Heart left ventricle (tissue), 16 donors: ENCODE measurements at regions of chr15 and their contacts with region 1.

Region 1: GRCh38 chr15:101501703-101502373 is 12.3 kb upstream of the PCSK6 start:
- DNase-seq: peak in 2 of 5 donors; percentile 56 to 61
- ATAC-seq: peak; percentile 32 to 58 (median 52)
- H3K4me3 ChIP-seq: peak overlapping the region in 3 of 12 donors; percentile 2 to 13 (median 4)
- H3K27ac ChIP-seq: peak overlapping the region in 4 of 12 donors; percentile 71 to 84 (median 77)
- H3K4me1 ChIP-seq: peaks cover 0 to 38% (median 10%) of the 10 kb centered on the region in 12 donors
- H3K27me3 ChIP-seq: peaks cover 0 to 15% (median 0%) of the 10 kb centered on the region in 9 donors
- CTCF ChIP-seq: peak; percentile 28 to 66 (median 52)
- POLR2A ChIP-seq: no peak

Region 2: DNA sequence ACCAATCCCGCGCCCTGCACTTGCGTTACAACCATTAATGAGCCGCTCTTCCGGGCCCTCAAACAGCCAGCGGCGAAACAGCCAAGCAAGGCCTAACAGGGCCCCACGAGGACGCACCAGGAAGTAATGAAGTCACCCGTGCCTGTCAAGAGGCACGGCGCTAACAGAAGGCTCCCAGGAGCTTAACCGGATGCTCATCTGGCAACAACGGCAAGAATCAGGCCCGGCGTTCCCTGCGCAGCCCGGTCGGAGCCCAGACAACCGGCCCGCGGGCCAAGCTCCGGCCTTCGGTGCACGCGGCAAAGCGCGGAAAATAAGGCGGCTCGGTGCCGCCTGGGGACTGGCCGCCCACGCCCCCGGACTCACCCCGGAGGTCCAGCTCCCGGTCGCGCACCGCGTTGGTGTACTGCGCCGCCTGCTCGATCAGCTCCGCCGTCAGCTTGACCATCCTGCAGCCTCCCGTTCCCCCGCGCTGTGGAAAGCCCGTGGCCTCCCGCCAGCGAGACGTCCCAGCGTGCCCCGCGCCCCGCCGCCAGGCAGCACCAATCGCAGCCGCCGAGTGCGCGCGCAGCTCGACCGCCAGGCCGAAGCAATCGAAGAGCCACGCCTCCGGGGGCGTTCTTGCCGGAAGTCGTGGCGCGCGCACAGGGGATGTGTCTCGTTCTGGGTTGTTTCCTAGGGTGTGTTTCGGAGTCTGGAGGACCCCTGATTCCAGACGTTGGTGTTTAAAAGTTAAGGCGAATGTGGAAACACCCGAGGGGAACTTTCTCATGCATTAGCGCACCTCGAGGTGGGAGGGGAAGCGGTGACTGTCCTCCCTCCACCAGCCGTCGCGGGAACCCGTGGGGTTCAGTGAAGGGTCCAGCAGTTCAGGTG is 206.9 kb before region 1 on chr15 and contains the start of gene SNRPA1:
- intact Hi-C with region 1: loop called (anchors 2 to 10 kb)
- DNase-seq: peak; percentile 98 to 100 (median 99)
- ATAC-seq: peak; percentile 76 to 96 (median 92)
- H3K4me3 ChIP-seq: peak within 1 kb of the TSS; percentile 73 to 99 (median 93)
- H3K27ac ChIP-seq: peak within 1 kb of the TSS; percentile 85 to 98 (median 96)
- H3K4me1 ChIP-seq: peaks cover 4 to 36% (median 27%) of the 10 kb centered on the region in 12 donors
- H3K27me3 ChIP-seq: no peaks in the 10 kb centered on the region
- CTCF ChIP-seq: no peak
- POLR2A ChIP-seq: peak; percentile 29 to 76
- total RNA-seq, gene SNRPA1: 17.6 to 44.3 (median 28.6) TPM

Region 3: GRCh38 chr15:101353240-101353639 is 148.6 kb before region 1 on chr15:
- intact Hi-C with region 1: loop called in 3 of 10 experiments (anchors 5 kb)
- DNase-seq: no peak
- ATAC-seq: no peak
- H3K4me3 ChIP-seq: no peak overlapping the region
- H3K27ac ChIP-seq: no peak overlapping the region
- H3K4me1 ChIP-seq: peaks cover 0 to 25% (median 7%) of the 10 kb centered on the region in 12 donors
- H3K27me3 ChIP-seq: no peaks in the 10 kb centered on the region
- CTCF ChIP-seq: no peak
- POLR2A ChIP-seq: no peak

Region 4: DNA sequence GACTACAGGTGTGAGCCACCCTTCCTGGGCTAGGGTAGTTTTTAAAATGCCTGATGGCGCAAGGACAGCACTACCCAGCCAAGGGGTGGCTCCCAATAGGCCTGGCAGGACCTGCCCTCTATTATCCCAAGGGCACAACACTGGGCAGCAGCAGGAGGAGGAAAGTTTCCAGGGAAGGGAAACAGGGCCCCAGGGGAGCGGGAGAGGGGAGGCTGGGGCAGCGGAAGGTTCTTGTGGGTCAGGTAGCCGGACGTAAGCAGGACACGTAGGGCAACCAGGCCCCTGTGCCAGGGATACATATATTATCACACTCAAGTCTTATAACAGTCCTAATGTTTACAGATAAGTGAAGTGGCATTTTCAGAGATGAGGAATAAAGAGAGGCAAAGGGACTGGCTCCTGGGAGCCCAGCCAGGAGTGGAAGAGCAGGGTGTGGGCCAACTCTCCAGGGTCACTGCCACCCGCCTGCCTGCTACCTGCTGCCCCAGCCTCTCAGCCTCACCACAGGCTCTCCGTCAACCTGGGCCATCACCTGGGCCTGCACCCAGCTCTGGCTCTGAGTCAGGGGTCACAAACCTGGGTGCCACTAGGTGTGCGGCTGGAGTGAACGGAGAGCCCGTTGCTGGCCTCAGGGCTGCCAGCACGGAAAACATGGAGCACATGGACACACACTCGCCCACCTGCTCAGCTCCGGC is 133.6 kb before region 1 on chr15:
- intact Hi-C with region 1: loop called in 1 of 10 experiments (anchors 5 kb)
- DNase-seq: peak in 4 of 5 donors; percentile 55 to 87 (median 77)
- ATAC-seq: peak; percentile 89 to 91 (median 90)
- H3K4me3 ChIP-seq: peak overlapping the region in 5 of 12 donors; percentile 7 to 34 (median 21)
- H3K27ac ChIP-seq: peak overlapping the region; percentile 27 to 94 (median 76)
- H3K4me1 ChIP-seq: peaks cover 0 to 22% (median 8%) of the 10 kb centered on the region in 12 donors
- H3K27me3 ChIP-seq: no peaks in the 10 kb centered on the region
- CTCF ChIP-seq: no peak
- POLR2A ChIP-seq: no peak

Region 5: GRCh38 chr15:101445562-101446517 is 56.0 kb before region 1 on chr15:
- intact Hi-C with region 1: loop called in 1 of 10 experiments (anchors 10 kb)
- DNase-seq: peak; percentile 69 to 88 (median 77)
- ATAC-seq: peak; percentile 67 to 84 (median 74)
- H3K4me3 ChIP-seq: no peak overlapping the region
- H3K27ac ChIP-seq: peak overlapping the region; percentile 2 to 90 (median 58)
- H3K4me1 ChIP-seq: peaks cover 0 to 48% (median 23%) of the 10 kb centered on the region in 12 donors
- H3K27me3 ChIP-seq: no peaks in the 10 kb centered on the region
- CTCF ChIP-seq: peak in 2 of 12 donors; percentile 9 to 17
- POLR2A ChIP-seq: no peak

Region 6: DNA sequence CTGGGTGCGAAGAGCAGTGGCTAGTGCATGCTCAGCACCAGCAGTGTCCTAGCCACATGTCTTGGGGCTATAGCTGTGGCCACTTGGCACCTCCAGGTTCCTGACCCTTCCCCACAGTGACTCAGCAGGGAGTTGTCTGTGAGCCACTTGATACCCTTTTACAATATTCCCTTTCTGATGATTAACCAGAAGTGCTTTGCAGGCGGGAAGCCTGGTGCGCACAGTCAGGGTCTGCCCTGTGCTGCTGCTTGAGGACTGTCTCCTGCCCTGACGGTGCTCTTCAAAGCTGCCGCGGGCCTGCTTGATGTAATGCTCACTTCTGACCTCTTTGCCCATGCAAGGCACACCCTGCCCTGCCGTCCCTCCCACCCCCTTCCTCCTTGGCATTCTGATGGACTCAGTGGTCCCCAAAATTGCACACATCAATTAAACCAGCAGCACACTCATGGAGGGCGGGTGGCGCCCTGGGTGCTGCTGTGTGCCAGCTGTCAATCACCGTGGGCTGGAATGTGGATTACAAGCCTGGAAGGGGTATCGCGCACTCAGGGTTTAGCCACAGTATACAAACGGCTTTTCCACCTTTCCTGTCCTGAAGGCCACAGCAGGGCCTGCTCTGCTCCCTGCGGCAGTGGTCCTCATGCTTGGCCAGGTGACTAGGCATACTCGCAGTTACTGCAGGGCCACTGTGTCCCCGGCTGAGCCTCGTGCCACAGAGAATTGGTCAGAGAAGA is 28.6 kb after region 1 on chr15:
- intact Hi-C with region 1: no loop called
- DNase-seq: no peak
- ATAC-seq: no peak
- H3K4me3 ChIP-seq: no peak overlapping the region
- H3K27ac ChIP-seq: no peak overlapping the region
- H3K4me1 ChIP-seq: peaks cover 0 to 25% (median 14%) of the 10 kb centered on the region in 12 donors
- H3K27me3 ChIP-seq: no peaks in the 10 kb centered on the region
- CTCF ChIP-seq: no peak
- POLR2A ChIP-seq: no peak

Region 7: GRCh38 chr15:101540480-101541239 is 38.8 kb after region 1 on chr15:
- intact Hi-C with region 1: no loop called
- DNase-seq: peak in 1 of 5 donors; percentile 50
- ATAC-seq: peak in 3 of 4 donors; percentile 22 to 70 (median 36)
- H3K4me3 ChIP-seq: no peak overlapping the region
- H3K27ac ChIP-seq: no peak overlapping the region
- H3K4me1 ChIP-seq: peaks cover 0 to 9% (median 0%) of the 10 kb centered on the region in 12 donors
- H3K27me3 ChIP-seq: peaks cover 0 to 5% (median 0%) of the 10 kb centered on the region in 9 donors
- CTCF ChIP-seq: peak in 8 of 12 donors; percentile 10 to 42 (median 16)
- POLR2A ChIP-seq: no peak